ENCODE measurements at regions of chr9 and their contacts with region 1.

Region 1: GRCh38 chr9:95327239-95327865 is 9.8 kb upstream of the FANCC start:
- DNase-seq: no peak
- H3K4me3 ChIP-seq: no peak overlapping the region
- H3K27ac ChIP-seq: no peak overlapping the region
- H3K4me1 ChIP-seq: no peaks in the 10 kb centered on the region
- H3K27me3 ChIP-seq: no peaks in the 10 kb centered on the region
- CTCF ChIP-seq: no peak

Region 2: DNA sequence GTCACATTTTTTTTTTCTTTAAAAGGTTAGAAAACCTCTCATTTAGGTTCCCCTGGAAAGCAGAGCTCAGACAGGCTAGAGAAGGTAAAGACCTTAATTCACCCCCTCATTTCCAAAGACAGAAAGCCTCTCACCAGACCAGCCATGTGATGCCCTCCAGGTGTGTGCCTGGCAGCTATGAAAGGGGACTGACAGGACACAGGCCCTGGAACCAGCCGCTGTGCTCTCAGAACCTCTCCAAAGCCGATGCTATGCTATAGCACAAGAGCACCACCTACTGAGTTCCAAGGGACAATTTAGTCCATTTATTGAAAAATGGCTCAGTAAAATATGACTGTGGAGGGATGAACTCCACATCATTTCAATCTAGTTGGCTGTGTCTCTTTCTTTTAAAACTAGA is 58.7 kb before region 1 on chr9:
- intact Hi-C with region 1: loop called (anchors 10 kb)
- DNase-seq: no peak
- H3K4me3 ChIP-seq: no peak overlapping the region
- H3K27ac ChIP-seq: no peak overlapping the region
- H3K4me1 ChIP-seq: no peaks in the 10 kb centered on the region
- H3K27me3 ChIP-seq: no peaks in the 10 kb centered on the region
- CTCF ChIP-seq: peak; percentile 9 to 54 (median 34)

Measured in ascending aorta (tissue), 2 donors.